HepG2 (cell line): ENCODE measurements at regions of chr1 and their contacts with region 1.

Region 1: GRCh38 chr1:35641233-35641866 is at the start of gene PSMB2:
- DNase-seq: peak; percentile 91
- ATAC-seq: peak; percentile 91
- H3K4me3 ChIP-seq: peak within 1 kb of the TSS; percentile 93 to 99 (median 98)
- H3K27ac ChIP-seq: peak within 1 kb of the TSS; percentile 95
- H3K4me1 ChIP-seq: peaks cover 25% of the 10 kb centered on the region
- H3K27me3 ChIP-seq: peaks cover 0 to 10% of the 10 kb centered on the region in 2 experiments; a peak in 2 of 5 replicates
- CTCF ChIP-seq: peak; percentile 17; the same call in 1 of the 2 replicates
- EP300 ChIP-seq: no peak
- POLR2A ChIP-seq: peak; percentile 94
- RAD21 ChIP-seq: 0 out of 2 replicates have a peak, but pooled peaks have one; percentile 27
- total RNA-seq, gene PSMB2: 62.2 and 102 TPM in 2 replicates

Region 2: GRCh38 chr1:35577071-35577998 is 64.0 kb before region 1 on chr1:
- CTCF ChIA-PET with region 1: no interaction called
- POLR2A ChIA-PET with region 1: no interaction called
- in situ Hi-C with region 1: no loop called
- intact Hi-C with region 1: loop called (anchors 5 kb)
- DNase-seq: no peak
- ATAC-seq: no peak
- H3K4me3 ChIP-seq: no peak overlapping the region
- H3K27ac ChIP-seq: no peak overlapping the region
- H3K4me1 ChIP-seq: peaks cover 28% of the 10 kb centered on the region
- H3K27me3 ChIP-seq: peaks cover 0 to 3% of the 10 kb centered on the region in 2 experiments; a peak in 1 of 5 replicates
- CTCF ChIP-seq: no peak
- EP300 ChIP-seq: no peak
- POLR2A ChIP-seq: no peak
- RAD21 ChIP-seq: no peak

Region 3: GRCh38 chr1:35707601-35708440 is 66.5 kb after region 1 on chr1:
- CTCF ChIA-PET with region 1: no interaction called
- POLR2A ChIA-PET with region 1: no interaction called
- in situ Hi-C with region 1: no loop called
- intact Hi-C with region 1: loop called (anchors 10 kb)
- DNase-seq: no peak
- ATAC-seq: peak; percentile 75
- H3K4me3 ChIP-seq: peak overlapping the region; percentile 47 to 67 (median 54)
- H3K27ac ChIP-seq: no peak overlapping the region
- H3K4me1 ChIP-seq: peaks cover 7% of the 10 kb centered on the region
- H3K27me3 ChIP-seq: peaks cover 2 to 39% of the 10 kb centered on the region in 2 experiments; a peak in 3 of 5 replicates
- CTCF ChIP-seq: no peak
- EP300 ChIP-seq: no peak
- POLR2A ChIP-seq: no peak
- RAD21 ChIP-seq: no peak